ENCODE measurements at regions of chr9 and their contacts with region 1.

Region 1: DNA sequence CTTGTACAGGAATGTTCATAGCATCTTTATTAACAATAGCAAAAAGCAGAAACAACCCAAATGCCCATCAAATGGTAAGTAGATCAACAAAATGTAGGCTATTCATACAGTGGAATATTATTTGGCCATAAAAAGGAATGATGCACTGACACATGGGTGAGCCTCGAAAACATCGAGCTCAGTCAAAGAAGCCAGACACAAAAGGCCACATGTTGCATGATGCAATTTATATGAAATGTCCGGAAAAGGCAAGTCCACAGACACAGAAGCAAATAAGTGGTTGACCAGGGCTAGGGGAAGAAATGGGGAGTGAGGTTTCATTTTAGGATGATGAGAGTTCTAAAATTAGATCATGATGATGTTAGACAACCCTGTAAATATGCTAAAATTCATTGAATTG is 16.5 kb upstream of the SLC2A8 start:
- DNase-seq: no peak
- ATAC-seq: no peak
- H3K4me3 ChIP-seq: no peak overlapping the region
- H3K27ac ChIP-seq: no peak overlapping the region
- H3K4me1 ChIP-seq: no peaks in the 10 kb centered on the region
- H3K27me3 ChIP-seq: no peaks in the 10 kb centered on the region
- CTCF ChIP-seq: no peak

Region 2: GRCh38 chr9:127403507-127404192 is 23.2 kb after region 1 on chr9:
- CTCF ChIA-PET with region 1: no interaction called
- POLR2A ChIA-PET with region 1: interaction called, 14 read pairs
- intact Hi-C with region 1: no loop called
- DNase-seq: no peak
- ATAC-seq: no peak
- H3K4me3 ChIP-seq: no peak overlapping the region
- H3K27ac ChIP-seq: no peak overlapping the region
- H3K4me1 ChIP-seq: peaks cover 2% of the 10 kb centered on the region
- H3K27me3 ChIP-seq: no peaks in the 10 kb centered on the region
- CTCF ChIP-seq: no peak

Measured in PC-3 (cell line).